ENCODE measurements at regions of chr1 and their contacts with region 1.

Region 1: DNA sequence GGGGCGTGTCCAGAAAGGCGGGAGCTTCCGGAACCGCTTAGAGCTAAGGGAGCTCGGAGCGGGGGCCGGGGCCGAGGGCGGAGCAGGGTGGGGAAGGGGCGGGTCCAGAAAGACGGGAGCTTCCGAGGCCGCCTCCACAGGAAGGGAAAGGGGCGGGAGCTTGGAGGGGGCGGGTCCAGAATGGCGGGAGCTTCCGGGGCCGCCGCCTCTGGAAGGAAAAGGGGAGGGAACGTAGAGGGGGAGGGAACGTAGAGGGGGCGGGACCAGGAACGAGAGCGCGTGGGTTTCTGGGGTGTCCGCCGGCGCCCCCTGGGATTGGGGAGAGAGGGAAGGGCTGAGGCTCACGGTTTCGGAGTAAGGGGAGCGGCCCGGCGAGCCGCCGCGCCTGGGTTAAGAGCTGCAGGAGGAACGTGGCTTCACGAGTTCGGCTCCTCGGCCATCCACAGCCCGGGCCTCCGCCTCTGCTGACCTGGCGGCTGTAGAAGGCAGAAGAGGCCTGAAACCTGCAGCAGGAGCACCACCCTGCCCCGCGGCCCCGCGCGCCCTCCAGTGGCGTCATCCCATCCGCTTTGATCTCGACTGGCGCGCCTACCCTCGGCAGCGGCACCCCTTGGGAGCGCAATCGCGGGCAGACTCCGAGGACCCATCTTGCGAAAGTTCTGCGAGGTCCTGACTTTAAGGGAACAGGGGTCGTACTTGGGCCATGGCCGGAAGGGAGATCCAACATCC is 22.9 kb upstream of the HPDL start:
- DNase-seq: peak; percentile 91 to 98 (median 96)
- ATAC-seq: peak; percentile 85 to 91 (median 89)
- H3K4me3 ChIP-seq: peak overlapping the region; percentile 54 to 62
- H3K4me3 Mint-ChIP-seq: peak overlapping the region; percentile 88 to 90 (median 90)
- H3K27ac ChIP-seq: peak overlapping the region; percentile 94
- H3K27ac Mint-ChIP-seq: peak overlapping the region; percentile 96 to 98
- H3K4me1 ChIP-seq: peaks cover 2 to 18% of the 10 kb centered on the region in 2 experiments
- H3K4me1 Mint-ChIP-seq: peaks cover 19 to 32% (median 20%) of the 10 kb centered on the region in 3 donors
- H3K27me3 ChIP-seq: no peaks in the 10 kb centered on the region
- H3K27me3 Mint-ChIP-seq: no peaks in the 10 kb centered on the region

Region 2: GRCh38 chr1:44775078-44775929 is 528.4 kb before region 1 on chr1 and contains the start of gene RPS8:
- CTCF ChIA-PET with region 1: interaction called in 1 of 2 experiments, 12 read pairs
- POLR2A ChIA-PET with region 1: interaction called in 1 of 2 experiments, 3 read pairs
- DNase-seq: peak; percentile 78 to 95 (median 86)
- ATAC-seq: peak; percentile 80 to 86 (median 84)
- H3K4me3 ChIP-seq: peak within 1 kb of the TSS; percentile 65 to 88
- H3K4me3 Mint-ChIP-seq: peak within 1 kb of the TSS; percentile 92 to 94 (median 93)
- H3K27ac ChIP-seq: peak within 1 kb of the TSS; percentile 81
- H3K27ac Mint-ChIP-seq: peak within 1 kb of the TSS; percentile 94 to 95
- H3K4me1 ChIP-seq: peaks cover 14 to 30% of the 10 kb centered on the region in 2 experiments
- H3K4me1 Mint-ChIP-seq: peaks cover 33 to 39% (median 37%) of the 10 kb centered on the region in 3 donors
- H3K27me3 ChIP-seq: no peaks in the 10 kb centered on the region
- H3K27me3 Mint-ChIP-seq: no peaks in the 10 kb centered on the region
- total RNA-seq, gene RPS8: 2,713 to 2,895 (median 2,873) TPM

Region 3: DNA sequence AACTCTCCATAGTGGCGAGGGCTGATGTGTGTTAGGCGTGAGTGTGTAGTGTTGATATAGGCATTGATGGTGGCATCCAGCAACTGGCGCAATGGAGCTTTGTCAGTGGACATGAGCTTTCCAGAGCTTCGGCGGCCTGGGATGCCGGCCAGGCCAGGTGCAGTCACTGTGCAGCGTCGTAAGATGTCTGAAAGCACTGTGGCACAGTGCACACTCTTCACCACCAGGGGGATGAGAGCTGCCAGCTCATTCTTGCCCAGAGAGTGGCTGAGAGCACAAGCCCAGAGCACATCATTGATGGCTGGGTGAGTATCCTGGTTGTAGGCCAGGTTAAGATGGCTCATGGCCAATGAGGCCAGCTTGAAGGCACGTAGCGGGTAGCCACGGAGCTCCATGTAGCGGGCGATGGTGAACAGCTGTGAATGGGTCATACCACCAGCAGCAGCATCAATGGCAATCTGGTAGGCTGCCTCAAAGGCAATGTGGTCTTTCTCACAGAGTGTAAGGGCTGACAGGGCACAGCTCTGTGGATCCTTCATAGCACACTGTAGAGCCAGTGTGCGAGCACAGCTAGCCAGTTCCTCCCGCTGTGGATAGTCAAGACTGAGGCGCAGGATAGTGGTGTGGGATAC is 285.0 kb before region 1 on chr1:
- CTCF ChIA-PET with region 1: interaction called, 9 to 124 read pairs
- POLR2A ChIA-PET with region 1: no interaction called
- DNase-seq: peak; percentile 12 to 75 (median 48)
- ATAC-seq: peak; percentile 77 to 87 (median 84)
- H3K4me3 ChIP-seq: no peak overlapping the region
- H3K4me3 Mint-ChIP-seq: no peak overlapping the region
- H3K27ac ChIP-seq: no peak overlapping the region
- H3K27ac Mint-ChIP-seq: no peak overlapping the region
- H3K4me1 ChIP-seq: peaks cover 0 to 14% of the 10 kb centered on the region in 2 experiments
- H3K4me1 Mint-ChIP-seq: peaks cover 13 to 21% (median 14%) of the 10 kb centered on the region in 3 donors
- H3K27me3 ChIP-seq: no peaks in the 10 kb centered on the region
- H3K27me3 Mint-ChIP-seq: no peaks in the 10 kb centered on the region

Region 4: DNA sequence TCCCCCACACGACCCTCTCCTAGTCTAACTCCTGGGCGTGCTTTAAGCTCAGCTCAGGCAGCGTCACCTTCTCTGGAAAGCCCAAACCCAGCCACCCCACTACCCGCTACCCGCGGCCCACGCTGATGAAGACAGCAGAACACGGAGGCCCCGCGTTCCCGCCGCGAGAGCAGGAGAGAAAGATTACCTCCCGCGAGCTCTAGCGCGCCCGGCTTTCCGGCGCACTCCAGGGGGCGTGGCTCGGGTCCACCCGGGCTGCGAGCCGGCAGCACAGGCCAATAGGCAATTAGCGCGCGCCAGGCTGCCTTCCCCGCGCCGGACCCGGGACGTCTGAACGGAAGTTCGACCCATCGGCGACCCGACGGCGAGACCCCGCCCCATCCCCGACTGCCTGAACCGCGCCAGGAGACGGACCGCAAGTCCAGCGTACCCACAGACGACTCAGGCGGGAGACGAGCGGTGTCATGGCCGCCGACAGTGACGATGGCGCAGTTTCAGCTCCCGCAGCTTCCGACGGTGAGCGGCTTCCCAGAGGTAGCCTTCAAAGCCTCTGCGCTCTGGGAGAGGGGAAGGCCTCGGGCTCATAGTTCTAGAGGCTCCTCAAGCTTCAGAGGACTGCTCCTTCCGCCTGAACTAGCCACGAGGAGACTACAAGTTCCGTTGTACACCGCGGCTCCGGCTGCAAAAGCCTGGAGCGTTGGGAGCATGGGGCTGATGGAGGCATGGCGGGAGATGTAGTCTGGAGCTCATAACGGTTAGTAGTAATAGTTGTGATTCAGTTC is 36.2 kb after region 1 on chr1 and contains the starts of genes MUTYH and TOE1:
- CTCF ChIA-PET with region 1: interaction called, 5 to 39 read pairs
- POLR2A ChIA-PET with region 1: interaction called, 12 to 23 read pairs
- DNase-seq: peak; percentile 79 to 92 (median 87)
- ATAC-seq: peak; percentile 84 to 90 (median 90)
- H3K4me3 ChIP-seq: peak within 1 kb of the TSS; percentile 68 to 82
- H3K4me3 Mint-ChIP-seq: peak within 1 kb of the TSS; percentile 98 to 100 (median 100)
- H3K27ac ChIP-seq: peak within 1 kb of the TSS; percentile 95
- H3K27ac Mint-ChIP-seq: peak within 1 kb of the TSS; percentile 99 to 100
- H3K4me1 ChIP-seq: peaks cover 7 to 39% of the 10 kb centered on the region in 2 experiments
- H3K4me1 Mint-ChIP-seq: peaks cover 62 to 70% (median 62%) of the 10 kb centered on the region in 3 donors
- H3K27me3 ChIP-seq: no peaks in the 10 kb centered on the region
- H3K27me3 Mint-ChIP-seq: no peaks in the 10 kb centered on the region
- total RNA-seq, gene MUTYH: 60.2 to 71.0 (median 68.4) TPM
- total RNA-seq, gene TOE1: 16.8 to 50.0 (median 19.8) TPM

Region 5: GRCh38 chr1:45442272-45442671 is 138.5 kb after region 1 on chr1:
- CTCF ChIA-PET with region 1: no interaction called
- POLR2A ChIA-PET with region 1: no interaction called
- DNase-seq: no peak
- ATAC-seq: no peak
- H3K4me3 ChIP-seq: no peak overlapping the region
- H3K4me3 Mint-ChIP-seq: no peak overlapping the region
- H3K27ac ChIP-seq: no peak overlapping the region
- H3K27ac Mint-ChIP-seq: no peak overlapping the region
- H3K4me1 ChIP-seq: no peaks in the 10 kb centered on the region
- H3K4me1 Mint-ChIP-seq: no peaks in the 10 kb centered on the region
- H3K27me3 ChIP-seq: no peaks in the 10 kb centered on the region
- H3K27me3 Mint-ChIP-seq: no peaks in the 10 kb centered on the region

Region 6: GRCh38 chr1:45499415-45499769 is 195.6 kb after region 1 on chr1:
- CTCF ChIA-PET with region 1: interaction called, 3 to 25 read pairs
- POLR2A ChIA-PET with region 1: interaction called in 1 of 2 experiments, 3 read pairs
- DNase-seq: no peak
- ATAC-seq: peak in 1 of 4 experiments; percentile 5
- H3K4me3 ChIP-seq: peak overlapping the region; percentile 82 to 94
- H3K4me3 Mint-ChIP-seq: peak overlapping the region; percentile 91 to 94 (median 93)
- H3K27ac ChIP-seq: peak overlapping the region; percentile 66
- H3K27ac Mint-ChIP-seq: peak overlapping the region; percentile 89 to 90
- H3K4me1 ChIP-seq: peaks cover 6 to 27% of the 10 kb centered on the region in 2 experiments
- H3K4me1 Mint-ChIP-seq: peaks cover 28 to 37% (median 31%) of the 10 kb centered on the region in 3 donors
- H3K27me3 ChIP-seq: no peaks in the 10 kb centered on the region
- H3K27me3 Mint-ChIP-seq: no peaks in the 10 kb centered on the region